Mammary epithelial cell (primary cell): ENCODE measurements at regions of chr5 and their contacts with region 1.

Region 1: GRCh38 chr5:15584528-15584927 is 84.5 kb downstream of the FBXL7 start:
- DNase-seq: no peak
- H3K4me3 ChIP-seq: no peak overlapping the region
- H3K27ac ChIP-seq: no peak overlapping the region
- H3K4me1 ChIP-seq: no peaks in the 10 kb centered on the region
- H3K27me3 ChIP-seq: no peaks in the 10 kb centered on the region
- CTCF ChIP-seq: no peak

Region 2: DNA sequence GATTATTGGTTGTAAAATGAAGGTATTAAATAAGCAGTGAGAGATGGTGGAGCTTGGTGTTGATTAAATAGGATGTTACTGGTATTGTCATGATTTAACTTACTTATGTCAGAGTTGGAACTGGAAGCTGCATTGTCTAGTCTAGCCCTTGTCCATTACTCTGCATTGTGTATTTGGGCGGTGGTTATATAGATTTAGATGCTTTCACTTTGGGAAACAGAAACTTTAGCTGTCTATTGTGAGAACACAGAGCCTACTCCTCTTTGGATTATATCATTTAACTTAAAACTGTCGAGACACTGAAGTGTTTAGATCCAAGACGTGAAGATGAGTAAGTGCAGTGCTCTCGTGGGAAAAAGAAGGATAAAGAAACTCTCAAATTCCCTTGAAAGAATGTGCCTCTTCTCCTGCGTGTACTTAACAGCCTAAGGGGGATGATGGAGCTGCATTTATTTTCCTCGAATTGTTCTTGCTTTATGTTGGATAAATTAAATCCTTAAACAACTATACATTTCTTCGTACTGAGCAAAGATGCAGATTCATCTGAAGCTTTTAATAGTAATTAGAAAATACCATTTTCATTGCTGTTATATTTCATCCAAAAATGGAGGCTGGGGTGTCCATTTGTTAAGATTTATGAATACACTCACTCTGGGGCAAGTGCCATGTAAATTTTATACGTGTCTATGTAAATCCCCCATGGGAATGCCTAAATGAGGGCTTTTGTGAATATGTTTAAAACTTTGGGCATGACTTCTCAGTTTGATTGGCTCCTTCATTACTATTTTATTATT is 63.0 kb before region 1 on chr5:
- CTCF ChIA-PET with region 1: no interaction called
- dilution Hi-C with region 1: no loop called
- in situ Hi-C with region 1: no loop called
- intact Hi-C with region 1: no loop called
- DNase-seq: no peak
- H3K4me3 ChIP-seq: no peak overlapping the region
- H3K27ac ChIP-seq: no peak overlapping the region
- H3K4me1 ChIP-seq: no peaks in the 10 kb centered on the region
- H3K27me3 ChIP-seq: no peaks in the 10 kb centered on the region
- CTCF ChIP-seq: no peak

Region 3: GRCh38 chr5:15533129-15533893 is 51.2 kb before region 1 on chr5:
- CTCF ChIA-PET with region 1: no interaction called
- dilution Hi-C with region 1: loop called (anchors 5 kb)
- in situ Hi-C with region 1: no loop called
- intact Hi-C with region 1: no loop called
- DNase-seq: no peak
- H3K4me3 ChIP-seq: no peak overlapping the region
- H3K27ac ChIP-seq: no peak overlapping the region
- H3K4me1 ChIP-seq: no peaks in the 10 kb centered on the region
- H3K27me3 ChIP-seq: no peaks in the 10 kb centered on the region
- CTCF ChIP-seq: no peak